Activated CD4-positive, alpha-beta memory T cell treated with anti-CD3 and anti-CD28 coated beads for 36 hours (primary cell): ENCODE measurements at regions of chr2 and their contacts with region 1.

Region 1: DNA sequence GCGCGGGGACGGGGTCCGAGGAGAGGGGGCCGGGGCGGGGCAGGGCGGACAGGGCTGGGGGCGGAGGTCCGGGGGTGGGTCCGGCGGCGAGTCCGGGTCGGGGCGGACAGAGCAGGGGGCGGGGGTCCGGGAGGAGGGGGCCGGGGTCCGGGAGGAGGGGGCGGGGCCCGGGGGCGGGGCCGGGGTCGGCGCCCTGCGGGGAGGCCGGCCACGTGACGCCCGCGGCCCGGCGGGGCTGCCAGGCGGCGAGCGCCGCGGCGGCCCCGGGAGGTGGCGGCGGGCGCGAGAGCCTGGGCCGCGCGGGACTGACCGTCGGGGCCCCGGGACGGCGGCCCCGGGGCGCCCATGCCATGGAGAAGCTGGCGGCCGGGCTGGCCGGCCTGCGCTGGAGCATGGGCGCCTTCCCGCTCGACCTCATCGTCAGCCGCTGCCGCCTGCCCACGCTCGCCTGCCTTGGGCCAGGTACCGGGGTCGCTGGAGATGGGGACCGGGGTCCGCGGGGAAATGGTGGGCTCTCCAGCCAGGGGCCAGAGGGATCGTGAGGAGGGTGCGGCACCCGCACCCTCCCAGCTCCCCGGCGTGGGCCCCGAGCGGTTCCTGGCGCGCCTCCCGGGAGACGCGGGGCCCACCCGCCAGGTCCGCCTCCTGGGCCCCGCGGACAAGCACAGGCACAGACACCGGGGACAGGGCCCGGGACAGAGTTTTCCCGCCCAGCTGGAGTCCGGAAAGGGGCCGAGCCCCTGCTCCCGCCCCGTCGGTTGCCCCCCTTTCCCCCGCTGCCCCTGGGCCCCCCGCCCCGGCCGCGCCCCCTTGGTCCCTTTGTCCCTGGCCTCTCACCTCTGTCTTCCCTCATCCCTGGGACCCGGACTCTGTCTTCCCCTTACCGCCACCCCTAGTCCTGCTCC is at the start of gene GAREM2:
- DNase-seq: no peak
- H3K4me3 Mint-ChIP-seq: peak within 1 kb of the TSS; percentile 75
- H3K27ac Mint-ChIP-seq: no peak within 1 kb of the TSS
- H3K4me1 Mint-ChIP-seq: peaks cover 7% of the 10 kb centered on the region
- H3K27me3 Mint-ChIP-seq: peaks cover 27% of the 10 kb centered on the region
- total RNA-seq, gene GAREM2: 1.4 to 2.8 TPM

Region 2: GRCh38 chr2:25878361-25879132 is 294.6 kb before region 1 on chr2 and contains the start of gene ASXL2:
- CTCF ChIA-PET with region 1: no interaction called
- POLR2A ChIA-PET with region 1: no interaction called
- intact Hi-C with region 1: no loop called
- DNase-seq: peak; percentile 99
- H3K4me3 Mint-ChIP-seq: peak within 1 kb of the TSS; percentile 93
- H3K27ac Mint-ChIP-seq: peak within 1 kb of the TSS; percentile 94
- H3K4me1 Mint-ChIP-seq: peaks cover 39% of the 10 kb centered on the region
- H3K27me3 Mint-ChIP-seq: no peaks in the 10 kb centered on the region
- total RNA-seq, gene ASXL2: 37.8 to 38.7 TPM

Region 3: GRCh38 chr2:26184555-26185303 is 11.6 kb after region 1 on chr2:
- CTCF ChIA-PET with region 1: interaction called, 22 read pairs
- POLR2A ChIA-PET with region 1: interaction called, 5 read pairs
- intact Hi-C with region 1: no loop called
- DNase-seq: peak; percentile 89
- H3K4me3 Mint-ChIP-seq: peak overlapping the region; percentile 72
- H3K27ac Mint-ChIP-seq: no peak overlapping the region
- H3K4me1 Mint-ChIP-seq: peaks cover 14% of the 10 kb centered on the region
- H3K27me3 Mint-ChIP-seq: peaks cover 13% of the 10 kb centered on the region

Region 4: DNA sequence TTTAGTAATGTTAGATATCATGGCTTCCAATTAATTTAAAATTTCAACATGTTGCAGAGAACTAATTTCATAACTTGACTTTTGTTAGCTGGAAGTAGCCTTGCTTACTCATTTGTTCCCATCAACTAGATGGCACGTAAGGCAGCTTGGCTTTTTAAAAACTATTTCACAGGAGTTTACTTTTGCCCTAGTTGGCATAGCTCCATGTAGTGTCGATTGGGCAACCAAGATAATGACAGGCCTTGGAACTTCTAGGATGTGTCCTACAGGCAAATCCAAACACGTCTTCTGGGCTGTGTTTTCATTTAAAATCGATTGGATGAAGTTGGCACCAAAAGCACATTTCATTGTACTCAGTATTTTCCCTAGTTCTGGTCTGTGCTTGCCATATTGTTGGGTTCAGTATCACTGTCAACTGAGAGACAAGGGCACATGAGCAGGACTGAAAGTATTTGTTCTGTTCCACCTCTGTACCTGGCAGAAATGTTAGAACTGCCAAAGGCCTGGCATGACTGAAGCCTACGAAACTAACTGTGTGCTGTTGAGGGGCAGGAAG is 101.0 kb after region 1 on chr2:
- CTCF ChIA-PET with region 1: no interaction called
- POLR2A ChIA-PET with region 1: no interaction called
- intact Hi-C with region 1: no loop called
- DNase-seq: no peak
- H3K4me3 Mint-ChIP-seq: no peak overlapping the region
- H3K27ac Mint-ChIP-seq: no peak overlapping the region
- H3K4me1 Mint-ChIP-seq: peaks cover 14% of the 10 kb centered on the region
- H3K27me3 Mint-ChIP-seq: no peaks in the 10 kb centered on the region

Region 5: GRCh38 chr2:26469092-26469710 is 296.1 kb after region 1 on chr2:
- CTCF ChIA-PET with region 1: no interaction called
- POLR2A ChIA-PET with region 1: no interaction called
- intact Hi-C with region 1: loop called (anchors 5 kb)
- DNase-seq: peak; percentile 83
- H3K4me3 Mint-ChIP-seq: no peak overlapping the region
- H3K27ac Mint-ChIP-seq: no peak overlapping the region
- H3K4me1 Mint-ChIP-seq: no peaks in the 10 kb centered on the region
- H3K27me3 Mint-ChIP-seq: no peaks in the 10 kb centered on the region